ENCODE measurements at regions of chr7 and their contacts with region 1.

Region 1: DNA sequence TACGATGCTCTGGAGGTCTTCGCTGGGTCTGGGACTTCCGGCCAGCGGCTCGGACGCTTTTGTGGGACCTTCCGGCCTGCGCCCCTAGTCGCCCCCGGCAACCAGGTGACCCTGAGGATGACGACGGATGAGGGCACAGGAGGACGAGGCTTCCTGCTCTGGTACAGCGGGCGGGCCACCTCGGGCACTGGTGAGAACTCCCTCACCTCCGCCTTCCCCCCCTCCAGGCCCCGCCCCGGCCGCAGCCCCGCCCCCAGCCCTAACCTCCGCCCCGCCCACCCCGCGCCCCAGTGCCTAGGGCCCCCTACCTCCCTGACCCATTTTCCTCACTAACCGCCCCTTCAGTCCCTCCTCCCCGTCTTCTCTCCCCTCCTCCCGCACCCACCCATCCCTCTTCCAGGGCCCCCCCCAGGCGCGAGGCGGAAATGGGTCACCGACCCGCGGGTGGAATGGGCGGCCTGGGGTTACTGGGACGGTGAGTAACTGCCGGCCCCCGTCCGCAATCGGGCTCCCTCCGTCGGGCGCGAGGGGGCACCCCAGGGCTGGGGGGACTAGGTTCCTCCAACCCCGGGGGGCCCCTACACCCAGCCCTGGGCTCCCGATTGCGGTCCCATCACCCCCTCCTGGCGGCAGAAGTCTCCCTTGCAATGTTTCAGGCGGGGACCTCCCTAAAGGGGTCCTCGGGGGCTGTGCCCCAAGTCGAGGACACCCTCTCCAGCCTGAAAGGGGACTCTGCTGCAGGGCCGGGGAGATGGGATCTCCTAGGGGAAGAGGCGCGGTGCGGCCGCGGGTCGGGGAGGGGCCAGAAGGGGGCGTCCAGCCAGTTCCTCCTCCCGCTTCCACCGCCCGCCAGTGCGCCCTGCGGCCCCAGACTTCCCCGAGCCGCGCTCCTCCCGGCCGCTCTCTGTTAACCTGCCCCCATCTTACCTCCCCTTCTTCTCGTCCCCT is 2.1 kb downstream of the PCOLCE start:
- DNase-seq: peak; percentile 85
- ATAC-seq: peak; percentile 75
- H3K4me3 ChIP-seq: peak overlapping the region; percentile 36 to 85 (median 75)
- H3K4me3 Mint-ChIP-seq: peak overlapping the region; percentile 90
- H3K27ac ChIP-seq: peak overlapping the region; percentile 43 to 54
- H3K27ac Mint-ChIP-seq: peak overlapping the region; percentile 80
- H3K4me1 ChIP-seq: peaks cover 15 to 25% of the 10 kb centered on the region in 2 donors
- H3K4me1 Mint-ChIP-seq: peaks cover 12% of the 10 kb centered on the region
- H3K27me3 ChIP-seq: no peaks in the 10 kb centered on the region
- H3K27me3 Mint-ChIP-seq: no peaks in the 10 kb centered on the region
- CTCF ChIP-seq: peak; percentile 68

Region 2: GRCh38 chr7:100478966-100479665 is 125.2 kb before region 1 on chr7 and contains the start of gene TSC22D4:
- CTCF ChIA-PET with region 1: interaction called, 3 read pairs
- POLR2A ChIA-PET with region 1: interaction called, 12 read pairs
- intact Hi-C with region 1: no loop called
- DNase-seq: peak; percentile 92
- ATAC-seq: peak; percentile 70
- H3K4me3 ChIP-seq: peak within 1 kb of the TSS; percentile 90 to 99 (median 96)
- H3K4me3 Mint-ChIP-seq: peak within 1 kb of the TSS; percentile 97
- H3K27ac ChIP-seq: peak within 1 kb of the TSS; percentile 72 to 89
- H3K27ac Mint-ChIP-seq: peak within 1 kb of the TSS; percentile 91
- H3K4me1 ChIP-seq: peaks cover 34 to 51% of the 10 kb centered on the region in 2 donors
- H3K4me1 Mint-ChIP-seq: peaks cover 37% of the 10 kb centered on the region
- H3K27me3 ChIP-seq: no peaks in the 10 kb centered on the region
- H3K27me3 Mint-ChIP-seq: no peaks in the 10 kb centered on the region
- CTCF ChIP-seq: no peak
- total RNA-seq, gene TSC22D4: 92.8 and 95.0 TPM in 2 replicates

Region 3: DNA sequence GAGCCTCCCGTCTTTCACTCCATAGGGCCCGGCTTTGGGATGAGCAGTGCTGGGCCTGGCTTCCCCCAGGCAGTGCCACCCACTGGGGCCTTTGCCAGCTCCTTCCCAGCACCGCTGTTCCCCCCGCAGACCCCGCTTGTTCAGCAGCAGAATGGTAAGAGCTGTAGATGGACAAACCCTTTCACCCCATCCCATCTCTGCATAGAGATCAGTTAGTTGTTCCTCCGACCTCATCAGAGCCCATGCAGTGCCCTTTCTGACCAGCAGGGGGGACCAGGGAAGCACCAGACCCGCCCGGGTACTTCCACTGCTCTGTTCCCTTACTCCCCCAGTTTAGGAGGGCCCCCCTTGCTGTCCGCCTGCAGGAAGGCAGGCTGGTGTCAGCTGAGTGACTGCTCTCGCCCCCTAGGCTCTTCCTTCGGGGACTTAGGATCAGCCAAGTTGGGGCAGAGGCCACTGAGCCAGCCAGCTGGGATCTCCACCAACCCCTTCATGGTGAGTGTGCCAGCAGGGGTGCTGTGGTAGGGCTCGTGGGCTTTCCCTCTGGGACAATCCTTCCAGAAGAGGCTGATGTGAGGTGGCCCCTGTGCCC is 40.4 kb before region 1 on chr7:
- CTCF ChIA-PET with region 1: interaction called, 4 read pairs
- POLR2A ChIA-PET with region 1: no interaction called
- intact Hi-C with region 1: loop called (anchors 1 kb)
- DNase-seq: peak; percentile 85
- ATAC-seq: peak; percentile 77
- H3K4me3 ChIP-seq: no peak overlapping the region
- H3K4me3 Mint-ChIP-seq: no peak overlapping the region
- H3K27ac ChIP-seq: no peak overlapping the region
- H3K27ac Mint-ChIP-seq: no peak overlapping the region
- H3K4me1 ChIP-seq: peaks cover 20 to 29% of the 10 kb centered on the region in 2 donors
- H3K4me1 Mint-ChIP-seq: peaks cover 26% of the 10 kb centered on the region
- H3K27me3 ChIP-seq: no peaks in the 10 kb centered on the region
- H3K27me3 Mint-ChIP-seq: no peaks in the 10 kb centered on the region
- CTCF ChIP-seq: peak; percentile 94

Region 4: DNA sequence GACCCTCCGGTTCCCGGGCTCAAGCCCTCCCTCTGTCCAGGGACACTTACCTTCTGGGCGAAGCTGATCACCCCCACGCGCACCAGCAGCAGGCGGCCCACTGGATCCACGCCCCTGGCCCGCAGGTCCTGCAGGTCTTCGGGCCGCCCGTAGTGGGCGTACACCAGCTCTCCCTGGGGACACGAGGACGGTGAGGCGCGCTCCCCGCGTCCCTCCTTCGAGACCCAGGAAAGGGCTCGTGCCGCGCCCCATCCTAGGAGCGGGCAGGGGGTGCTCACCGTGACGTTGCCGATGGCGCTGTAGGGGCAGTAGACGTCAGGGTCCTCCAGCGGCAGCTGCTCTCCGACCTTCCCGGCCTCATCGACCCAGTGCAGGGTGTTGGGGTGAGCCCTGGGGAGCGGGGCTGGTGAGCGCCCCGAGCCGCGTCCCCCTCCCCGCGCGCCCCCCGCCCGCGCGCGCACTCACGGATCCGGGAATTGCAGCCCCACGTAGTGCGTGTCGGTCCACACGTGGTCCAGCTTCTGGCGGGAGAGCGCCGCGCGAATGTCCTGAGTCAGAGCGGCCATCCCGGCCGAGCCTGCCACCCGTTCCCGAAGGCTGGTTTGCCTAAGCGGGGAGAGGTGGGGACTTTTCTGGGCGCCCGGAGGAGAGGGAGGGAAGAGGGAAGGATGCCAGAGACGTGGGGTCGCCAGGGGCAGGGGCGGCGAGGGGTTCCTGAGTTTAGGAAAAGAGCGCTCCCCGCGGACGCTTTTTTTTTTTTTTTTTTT is 28.8 kb after region 1 on chr7:
- CTCF ChIA-PET with region 1: interaction called, 4 read pairs
- POLR2A ChIA-PET with region 1: interaction called, 3 read pairs
- intact Hi-C with region 1: loop called (anchors 1 kb)
- DNase-seq: peak; percentile 77
- ATAC-seq: peak; percentile 77
- H3K4me3 ChIP-seq: peak overlapping the region in 4 of 5 experiments; percentile 62 to 82 (median 72)
- H3K4me3 Mint-ChIP-seq: peak overlapping the region; percentile 90
- H3K27ac ChIP-seq: peak overlapping the region in 1 of 2 donors; percentile 48
- H3K27ac Mint-ChIP-seq: peak overlapping the region; percentile 83
- H3K4me1 ChIP-seq: peaks cover 6 to 15% of the 10 kb centered on the region in 2 donors
- H3K4me1 Mint-ChIP-seq: peaks cover 10% of the 10 kb centered on the region
- H3K27me3 ChIP-seq: peaks cover 0 to 3% (median 0%) of the 10 kb centered on the region in 4 experiments
- H3K27me3 Mint-ChIP-seq: no peaks in the 10 kb centered on the region
- CTCF ChIP-seq: no peak

Region 5: GRCh38 chr7:100691676-100692577 is 87.6 kb after region 1 on chr7:
- CTCF ChIA-PET with region 1: interaction called, 7 read pairs
- POLR2A ChIA-PET with region 1: interaction called, 5 read pairs
- intact Hi-C with region 1: loop called (anchors 1 kb)
- DNase-seq: peak; percentile 86
- ATAC-seq: peak; percentile 60
- H3K4me3 ChIP-seq: peak overlapping the region in 2 of 5 experiments; percentile 58 to 79
- H3K4me3 Mint-ChIP-seq: peak overlapping the region; percentile 89
- H3K27ac ChIP-seq: no peak overlapping the region
- H3K27ac Mint-ChIP-seq: peak overlapping the region; percentile 92
- H3K4me1 ChIP-seq: peaks cover 52 to 55% of the 10 kb centered on the region in 2 donors
- H3K4me1 Mint-ChIP-seq: peaks cover 51% of the 10 kb centered on the region
- H3K27me3 ChIP-seq: no peaks in the 10 kb centered on the region
- H3K27me3 Mint-ChIP-seq: no peaks in the 10 kb centered on the region
- CTCF ChIP-seq: peak; percentile 88